ENCODE measurements at regions of chr10 and their contacts with region 1.

Region 1: DNA sequence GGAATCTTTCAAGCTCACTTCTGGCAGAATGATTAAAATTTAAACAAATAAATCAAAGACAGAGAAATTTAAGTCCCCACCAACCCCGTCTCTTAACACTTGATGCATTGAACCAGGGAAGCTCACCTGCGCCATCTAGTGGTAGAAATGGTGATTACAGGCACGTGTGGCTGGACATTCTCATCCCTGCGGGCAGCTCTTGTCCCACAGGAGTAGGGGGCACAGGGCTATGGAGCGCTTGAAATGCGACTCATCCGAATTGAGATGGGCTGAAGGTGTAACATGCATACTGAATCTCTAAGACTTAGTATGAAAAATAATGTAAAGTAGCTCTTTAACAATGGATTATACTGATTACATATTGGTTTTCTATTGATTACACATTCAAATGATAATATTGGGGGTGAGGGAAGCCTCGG is 24.8 kb upstream of the SLIT1 start:
- DNase-seq: peak; percentile 72
- H3K4me3 Mint-ChIP-seq: no peak overlapping the region
- H3K27ac Mint-ChIP-seq: no peak overlapping the region
- H3K4me1 Mint-ChIP-seq: no peaks in the 10 kb centered on the region
- H3K27me3 Mint-ChIP-seq: no peaks in the 10 kb centered on the region

Region 2: DNA sequence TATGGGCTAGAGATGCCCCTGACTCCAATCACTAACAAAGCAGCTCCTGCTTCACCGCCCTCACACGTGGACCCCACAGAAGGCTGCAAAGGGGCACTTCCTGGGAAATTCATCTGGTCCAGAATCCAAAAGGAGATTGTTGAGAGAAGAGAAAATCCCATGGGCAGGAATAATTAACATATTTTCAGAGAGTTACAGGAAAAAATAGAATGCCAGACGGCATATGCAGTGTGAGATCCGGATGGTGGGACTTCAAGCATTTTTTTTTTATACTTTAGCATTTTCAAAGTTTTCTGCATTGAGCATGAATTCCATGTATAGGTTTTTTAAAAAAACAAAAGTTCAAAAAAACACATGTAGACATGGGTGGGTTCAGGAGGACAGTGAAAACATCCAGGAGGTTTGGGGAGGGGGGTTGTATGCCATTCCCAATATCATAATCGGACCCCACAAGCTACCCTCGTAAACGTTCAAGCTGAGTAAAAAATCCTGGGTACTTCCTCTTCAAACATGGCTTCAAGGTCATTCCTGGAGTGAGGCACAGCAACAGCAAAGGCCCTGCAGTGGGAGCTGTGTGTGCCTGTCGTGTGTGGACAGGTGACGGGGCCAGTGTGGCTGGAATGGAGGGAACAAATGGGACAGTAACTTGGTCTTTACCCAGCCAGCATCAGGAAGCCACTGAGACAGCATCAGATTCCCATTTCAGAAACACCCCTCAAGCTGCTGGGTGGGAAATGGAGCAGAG is 152.9 kb before region 1 on chr10:
- CTCF ChIA-PET with region 1: no interaction called
- POLR2A ChIA-PET with region 1: no interaction called
- DNase-seq: no peak
- H3K4me3 Mint-ChIP-seq: no peak overlapping the region
- H3K27ac Mint-ChIP-seq: no peak overlapping the region
- H3K4me1 Mint-ChIP-seq: no peaks in the 10 kb centered on the region
- H3K27me3 Mint-ChIP-seq: peaks cover 5% of the 10 kb centered on the region

Region 3: DNA sequence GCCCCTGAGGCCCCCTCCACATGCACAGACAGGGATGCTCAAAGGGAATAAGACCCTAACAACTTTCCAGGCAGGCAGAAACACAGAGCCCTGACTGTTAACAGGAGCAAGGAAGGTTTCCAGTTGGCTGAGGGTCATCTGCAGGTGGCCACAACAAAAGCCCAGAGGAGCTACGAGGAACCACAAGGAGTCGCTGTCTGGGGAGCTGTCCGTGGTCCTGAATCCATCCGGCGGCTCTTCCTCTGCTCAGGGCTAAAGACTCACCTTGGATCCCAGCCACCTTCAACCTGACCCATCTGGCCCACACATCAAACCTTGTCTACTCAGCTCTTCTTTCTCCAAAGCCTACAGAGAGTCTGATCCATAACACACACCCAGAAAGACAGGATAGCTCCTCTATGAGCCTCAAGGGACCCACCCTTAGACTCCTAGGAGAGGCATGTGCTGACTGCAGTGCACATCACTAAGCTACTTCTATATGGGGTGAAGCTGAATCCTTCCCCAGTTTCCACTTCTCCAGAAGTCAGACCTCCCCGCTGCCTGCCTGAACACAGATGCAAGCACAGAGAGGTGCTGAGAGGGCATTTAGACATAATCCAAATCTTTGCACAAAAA is 128.8 kb before region 1 on chr10:
- CTCF ChIA-PET with region 1: interaction called, 152 read pairs
- POLR2A ChIA-PET with region 1: interaction called, 3 read pairs
- DNase-seq: peak; percentile 64
- H3K4me3 Mint-ChIP-seq: no peak overlapping the region
- H3K27ac Mint-ChIP-seq: no peak overlapping the region
- H3K4me1 Mint-ChIP-seq: no peaks in the 10 kb centered on the region
- H3K27me3 Mint-ChIP-seq: peaks cover 24% of the 10 kb centered on the region

Region 4: GRCh38 chr10:97196223-97197029 is 14.1 kb before region 1 on chr10:
- CTCF ChIA-PET with region 1: interaction called, 111 read pairs
- POLR2A ChIA-PET with region 1: interaction called, 3 read pairs
- DNase-seq: peak; percentile 65
- H3K4me3 Mint-ChIP-seq: peak overlapping the region; percentile 68
- H3K27ac Mint-ChIP-seq: no peak overlapping the region
- H3K4me1 Mint-ChIP-seq: peaks cover 19% of the 10 kb centered on the region
- H3K27me3 Mint-ChIP-seq: peaks cover 47% of the 10 kb centered on the region

Region 5: GRCh38 chr10:97222326-97222961 is 11.9 kb after region 1 on chr10:
- CTCF ChIA-PET with region 1: interaction called, 25 read pairs
- POLR2A ChIA-PET with region 1: interaction called, 5 read pairs
- DNase-seq: no peak
- H3K4me3 Mint-ChIP-seq: no peak overlapping the region
- H3K27ac Mint-ChIP-seq: no peak overlapping the region
- H3K4me1 Mint-ChIP-seq: peaks cover 45% of the 10 kb centered on the region
- H3K27me3 Mint-ChIP-seq: no peaks in the 10 kb centered on the region

Region 6: GRCh38 chr10:97234400-97234799 is 23.8 kb after region 1 on chr10:
- CTCF ChIA-PET with region 1: interaction called, 25 read pairs
- POLR2A ChIA-PET with region 1: no interaction called
- DNase-seq: no peak
- H3K4me3 Mint-ChIP-seq: no peak overlapping the region
- H3K27ac Mint-ChIP-seq: no peak overlapping the region
- H3K4me1 Mint-ChIP-seq: peaks cover 9% of the 10 kb centered on the region
- H3K27me3 Mint-ChIP-seq: no peaks in the 10 kb centered on the region

Measured in activated CD4-positive, alpha-beta memory T cell treated with anti-CD3 and anti-CD28 coated beads, Interleukin-2, amount 10 ng/mL, durations not matched to agents 7 days and 5 days (primary cell).